ENCODE measurements at regions of chr11 and their contacts with region 1.

Region 1: GRCh38 chr11:86291466-86292262 is 10.4 kb upstream of the HIKESHI start:
- DNase-seq: peak; percentile 78
- ATAC-seq: peak; percentile 17
- H3K4me3 Mint-ChIP-seq: no peak overlapping the region
- H3K27ac Mint-ChIP-seq: peak overlapping the region; percentile 78
- H3K4me1 Mint-ChIP-seq: peaks cover 61% of the 10 kb centered on the region
- H3K27me3 Mint-ChIP-seq: peaks cover 5% of the 10 kb centered on the region

Region 2: GRCh38 chr11:86234831-86235461 is 56.7 kb before region 1 on chr11:
- CTCF ChIA-PET with region 1: no interaction called
- DNase-seq: no peak
- ATAC-seq: no peak
- H3K4me3 Mint-ChIP-seq: no peak overlapping the region
- H3K27ac Mint-ChIP-seq: no peak overlapping the region
- H3K4me1 Mint-ChIP-seq: peaks cover 11% of the 10 kb centered on the region
- H3K27me3 Mint-ChIP-seq: peaks cover 4% of the 10 kb centered on the region

Region 3: DNA sequence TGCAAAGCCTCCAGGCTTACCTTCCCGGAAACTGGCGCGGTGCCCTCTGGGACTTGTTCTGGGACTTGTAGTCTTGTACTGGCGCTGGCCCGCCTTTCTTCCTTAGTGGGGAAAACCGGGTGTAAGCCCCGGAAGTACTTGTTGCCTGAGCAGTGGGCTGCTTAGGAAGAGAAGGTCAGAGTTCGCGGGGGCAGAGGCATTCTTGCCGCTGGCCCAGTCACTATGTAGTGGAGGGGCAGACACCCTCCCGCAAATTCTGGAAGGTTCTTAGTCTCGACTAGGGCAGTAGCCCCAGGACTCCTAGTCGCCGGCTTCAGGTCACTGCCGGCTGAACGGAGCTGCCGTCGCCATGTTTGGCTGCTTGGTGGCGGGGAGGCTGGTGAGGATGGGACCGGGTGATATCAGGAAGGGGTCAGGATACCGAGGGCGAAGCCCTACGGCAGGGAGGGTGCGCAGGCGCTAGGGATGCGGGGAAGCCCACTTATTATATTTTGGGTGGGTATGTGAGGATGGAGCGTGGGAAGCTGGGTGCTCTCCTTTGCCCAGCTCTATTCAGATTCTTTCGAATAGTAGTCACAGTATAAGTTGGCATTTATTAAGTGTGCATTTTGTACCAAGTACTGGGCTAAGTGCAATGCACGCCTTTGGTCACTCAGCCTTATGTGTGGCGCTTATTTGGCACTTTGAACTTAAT is 10.6 kb after region 1 on chr11 and contains the start of gene HIKESHI:
- CTCF ChIA-PET with region 1: interaction called, 12 read pairs
- DNase-seq: peak; percentile 94
- ATAC-seq: peak; percentile 99
- H3K4me3 Mint-ChIP-seq: peak within 1 kb of the TSS; percentile 92
- H3K27ac Mint-ChIP-seq: peak within 1 kb of the TSS; percentile 87
- H3K4me1 Mint-ChIP-seq: peaks cover 31% of the 10 kb centered on the region
- H3K27me3 Mint-ChIP-seq: no peaks in the 10 kb centered on the region
- total RNA-seq, gene HIKESHI: 37.3 to 44.9 TPM

Measured in activated CD8-positive, alpha-beta memory T cell treated with anti-CD3 and anti-CD28 coated beads, Interleukin-2, amount 10 ng/mL, durations not matched to agents 7 days and 5 days (primary cell).